Activated T-helper 2 cell treated with anti-CD3 and anti-CD28 coated beads, Interferon-gamma antibody, Interleukin-2, Interleukin-4, amounts not matched to agents 10 μg/mL and 5 μg/mL and 100 μg/mL, durations not matched to agents 14 hours and 24 hours and 36 hours (primary cell): ENCODE measurements at regions of chr12 and their contacts with region 1.

Region 1: DNA sequence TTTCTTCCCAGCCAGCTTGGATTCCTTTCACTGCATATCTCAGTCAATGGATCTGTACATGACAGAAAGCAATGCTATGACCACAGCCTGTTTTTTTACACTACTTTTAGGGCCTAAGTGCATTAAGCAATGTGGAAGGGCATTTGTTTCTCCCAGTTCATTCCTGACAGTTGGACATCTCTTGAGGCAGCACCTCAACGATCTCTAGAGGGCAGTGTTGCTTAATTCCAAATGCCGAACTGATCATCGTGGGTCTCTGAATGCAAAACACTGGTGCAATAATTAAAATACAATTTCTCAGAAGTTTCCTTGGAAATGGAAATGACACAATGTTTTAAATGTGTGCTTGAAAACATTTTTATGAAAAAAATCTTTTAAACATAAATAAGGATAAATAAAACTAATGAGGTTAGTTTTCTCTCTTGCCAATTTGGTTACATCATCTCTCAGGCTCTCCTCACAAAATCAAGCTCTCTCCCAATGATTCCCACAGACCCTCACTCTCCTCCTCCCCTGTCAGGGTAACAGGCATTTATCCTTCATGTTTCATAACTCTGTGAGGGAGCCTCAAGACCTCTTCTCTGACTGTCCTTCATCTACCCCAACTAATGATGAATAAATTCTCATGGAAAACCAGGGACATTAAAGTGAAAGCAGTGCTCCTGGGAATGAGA is 192.4 kb upstream of the SLC16A7 start:
- DNase-seq: no peak
- H3K4me3 Mint-ChIP-seq: no peak overlapping the region
- H3K27ac Mint-ChIP-seq: no peak overlapping the region
- H3K4me1 Mint-ChIP-seq: peaks cover 18% of the 10 kb centered on the region
- H3K27me3 Mint-ChIP-seq: peaks cover 10% of the 10 kb centered on the region

Region 2: GRCh38 chr12:59808317-59808910 is 405.0 kb after region 1 on chr12:
- intact Hi-C with region 1: loop called (anchors 2 kb)
- DNase-seq: no peak
- H3K4me3 Mint-ChIP-seq: no peak overlapping the region
- H3K27ac Mint-ChIP-seq: no peak overlapping the region
- H3K4me1 Mint-ChIP-seq: no peaks in the 10 kb centered on the region
- H3K27me3 Mint-ChIP-seq: peaks cover 4% of the 10 kb centered on the region

Region 3: DNA sequence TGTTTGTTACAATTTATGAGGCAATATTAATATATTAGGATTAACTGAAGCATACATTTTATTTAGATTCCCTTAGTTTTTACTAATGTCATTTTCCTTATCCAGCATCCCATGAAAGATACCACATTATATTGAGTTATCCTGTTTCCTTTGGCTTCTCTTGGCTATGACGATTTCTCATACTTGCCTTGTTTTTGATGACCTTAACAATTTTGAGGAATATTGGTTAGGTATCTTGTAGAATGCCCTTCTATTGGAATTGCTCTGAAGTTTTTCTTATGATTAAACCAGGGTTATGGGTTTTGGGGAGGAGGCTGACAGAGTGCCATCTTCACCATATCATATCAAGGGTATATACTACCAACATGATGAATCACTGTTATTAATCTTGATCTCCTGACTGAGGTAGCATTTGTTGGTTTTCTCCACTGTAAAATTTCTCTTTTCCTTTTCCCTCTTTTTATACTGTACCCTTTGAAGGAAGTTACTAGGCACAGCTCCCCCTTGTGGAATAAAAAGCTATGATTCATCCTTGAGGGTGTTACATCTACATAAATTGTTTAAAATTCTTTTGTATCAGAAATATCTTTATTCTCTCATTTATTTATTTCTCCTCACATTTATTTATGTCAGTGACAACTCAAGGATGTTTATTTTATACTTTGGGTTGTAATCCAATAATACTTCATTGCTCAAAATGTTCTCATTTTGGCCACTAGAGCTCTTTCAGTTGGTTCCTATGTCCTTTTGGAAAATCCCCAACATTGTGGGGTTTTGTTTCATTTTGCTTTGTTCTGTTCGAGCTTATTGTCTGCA is 431.5 kb after region 1 on chr12:
- intact Hi-C with region 1: loop called (anchors 1 kb)
- DNase-seq: no peak
- H3K4me3 Mint-ChIP-seq: no peak overlapping the region
- H3K27ac Mint-ChIP-seq: no peak overlapping the region
- H3K4me1 Mint-ChIP-seq: no peaks in the 10 kb centered on the region
- H3K27me3 Mint-ChIP-seq: peaks cover 4% of the 10 kb centered on the region